CD4-positive, alpha-beta T cell (primary cell): ENCODE measurements at regions of chr6 and their contacts with region 1.

Region 1: DNA sequence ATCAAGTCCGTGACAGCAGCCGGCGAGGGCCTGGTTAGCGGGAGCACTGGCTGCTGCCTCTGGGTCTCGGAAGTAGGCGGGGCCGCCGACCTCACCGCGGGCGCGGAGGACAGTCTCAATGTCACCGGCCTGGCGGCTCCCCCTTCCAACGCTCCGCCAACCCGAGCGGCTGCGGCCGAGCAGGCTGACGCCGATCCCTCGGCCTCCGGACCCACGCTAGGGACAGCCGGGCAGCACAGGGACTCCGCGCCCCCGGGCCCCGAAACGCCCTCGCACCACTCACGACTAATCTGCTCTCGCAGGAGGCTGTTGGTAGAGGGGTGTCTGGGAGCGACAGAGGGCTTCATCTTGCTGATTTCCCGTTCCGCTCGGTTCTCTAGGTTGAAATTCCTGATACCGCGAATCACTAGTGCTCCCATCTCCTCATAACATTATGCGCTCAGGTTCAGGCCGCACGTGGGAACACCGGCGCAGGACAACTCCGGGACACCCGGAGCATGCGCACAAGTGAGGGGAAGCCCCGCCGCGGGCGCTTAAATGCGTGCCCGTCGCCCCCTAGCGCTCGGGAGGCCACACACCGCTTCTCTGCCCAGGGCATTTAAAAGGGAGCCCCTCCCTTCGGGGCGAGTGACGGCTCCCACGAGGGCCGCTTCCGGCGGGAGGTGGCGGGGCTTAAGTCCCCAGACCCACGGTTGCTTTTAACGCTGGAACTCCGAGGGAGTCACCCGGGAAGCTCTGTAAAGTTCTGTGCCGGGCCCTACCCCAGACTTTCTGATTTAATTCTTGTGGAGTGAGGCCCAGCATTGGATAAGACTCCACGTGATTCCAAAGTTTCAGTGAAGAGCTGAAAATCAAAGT is at the start of gene NDUFAF4:
- DNase-seq: peak; percentile 89 to 97 (median 92)
- ATAC-seq: peak; percentile 92
- H3K4me3 ChIP-seq: peak within 1 kb of the TSS; percentile 82
- H3K4me3 Mint-ChIP-seq: peak within 1 kb of the TSS; percentile 100
- H3K27ac ChIP-seq: peak within 1 kb of the TSS; percentile 89 to 95
- H3K27ac Mint-ChIP-seq: peak within 1 kb of the TSS; percentile 85
- H3K4me1 ChIP-seq: peaks cover 10% of the 10 kb centered on the region
- H3K4me1 Mint-ChIP-seq: peaks cover 42% of the 10 kb centered on the region
- H3K27me3 ChIP-seq: no peaks in the 10 kb centered on the region
- H3K27me3 Mint-ChIP-seq: peaks cover 9% of the 10 kb centered on the region
- CTCF ChIP-seq: peak; percentile 87
- total RNA-seq, gene NDUFAF4: 31.6 to 37.3 TPM

Region 2: GRCh38 chr6:95577304-95578105 is 1320.1 kb before region 1 on chr6 and contains the start of gene MANEA:
- CTCF ChIA-PET with region 1: interaction called, 3 read pairs
- POLR2A ChIA-PET with region 1: no interaction called
- intact Hi-C with region 1: loop called in 1 of 2 experiments (anchors 10 kb)
- DNase-seq: peak; percentile 59 to 93 (median 76)
- ATAC-seq: peak; percentile 84
- H3K4me3 ChIP-seq: peak within 1 kb of the TSS; percentile 91
- H3K4me3 Mint-ChIP-seq: peak within 1 kb of the TSS; percentile 95
- H3K27ac ChIP-seq: peak within 1 kb of the TSS; percentile 76 to 84
- H3K27ac Mint-ChIP-seq: peak within 1 kb of the TSS; percentile 95
- H3K4me1 ChIP-seq: peaks cover 11% of the 10 kb centered on the region
- H3K4me1 Mint-ChIP-seq: peaks cover 77% of the 10 kb centered on the region
- H3K27me3 ChIP-seq: no peaks in the 10 kb centered on the region
- H3K27me3 Mint-ChIP-seq: no peaks in the 10 kb centered on the region
- CTCF ChIP-seq: no peak
- total RNA-seq, gene MANEA: 6.1 to 8.0 TPM

Region 3: GRCh38 chr6:96626759-96627364 is 270.8 kb before region 1 on chr6:
- CTCF ChIA-PET with region 1: no interaction called
- POLR2A ChIA-PET with region 1: interaction called, 4 read pairs
- intact Hi-C with region 1: loop called in 1 of 2 experiments (anchors 5 kb)
- DNase-seq: peak in 3 of 14 experiments; percentile 21 to 39 (median 30)
- ATAC-seq: peak; percentile 41
- H3K4me3 ChIP-seq: no peak overlapping the region
- H3K4me3 Mint-ChIP-seq: no peak overlapping the region
- H3K27ac ChIP-seq: no peak overlapping the region
- H3K27ac Mint-ChIP-seq: no peak overlapping the region
- H3K4me1 ChIP-seq: no peaks in the 10 kb centered on the region
- H3K4me1 Mint-ChIP-seq: no peaks in the 10 kb centered on the region
- H3K27me3 ChIP-seq: no peaks in the 10 kb centered on the region
- H3K27me3 Mint-ChIP-seq: peaks cover 18% of the 10 kb centered on the region
- CTCF ChIP-seq: peak; percentile 57

Region 4: DNA sequence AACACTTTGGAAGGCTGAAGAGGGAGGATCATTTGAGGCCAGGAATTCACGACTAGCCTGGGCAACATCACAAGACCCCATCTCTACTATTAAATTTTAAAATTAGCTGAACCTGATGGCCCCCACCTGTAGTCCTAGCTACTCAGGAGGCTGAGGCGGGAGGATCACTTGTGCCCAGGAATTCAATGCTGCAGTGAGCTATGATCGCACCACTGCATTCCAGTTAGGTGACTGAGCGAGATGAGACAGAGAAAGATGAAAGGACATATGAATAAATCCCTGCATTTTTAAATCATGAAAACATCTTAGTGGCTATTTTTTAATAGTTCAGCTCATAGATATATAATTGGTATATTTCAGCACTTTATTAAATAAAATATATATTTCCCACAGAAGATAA is 154.1 kb before region 1 on chr6:
- CTCF ChIA-PET with region 1: no interaction called
- POLR2A ChIA-PET with region 1: no interaction called
- intact Hi-C with region 1: no loop called
- DNase-seq: no peak
- ATAC-seq: no peak
- H3K4me3 ChIP-seq: no peak overlapping the region
- H3K4me3 Mint-ChIP-seq: no peak overlapping the region
- H3K27ac ChIP-seq: no peak overlapping the region
- H3K27ac Mint-ChIP-seq: no peak overlapping the region
- H3K4me1 ChIP-seq: no peaks in the 10 kb centered on the region
- H3K4me1 Mint-ChIP-seq: no peaks in the 10 kb centered on the region
- H3K27me3 ChIP-seq: no peaks in the 10 kb centered on the region
- H3K27me3 Mint-ChIP-seq: peaks cover 4% of the 10 kb centered on the region
- CTCF ChIP-seq: no peak

Region 5: DNA sequence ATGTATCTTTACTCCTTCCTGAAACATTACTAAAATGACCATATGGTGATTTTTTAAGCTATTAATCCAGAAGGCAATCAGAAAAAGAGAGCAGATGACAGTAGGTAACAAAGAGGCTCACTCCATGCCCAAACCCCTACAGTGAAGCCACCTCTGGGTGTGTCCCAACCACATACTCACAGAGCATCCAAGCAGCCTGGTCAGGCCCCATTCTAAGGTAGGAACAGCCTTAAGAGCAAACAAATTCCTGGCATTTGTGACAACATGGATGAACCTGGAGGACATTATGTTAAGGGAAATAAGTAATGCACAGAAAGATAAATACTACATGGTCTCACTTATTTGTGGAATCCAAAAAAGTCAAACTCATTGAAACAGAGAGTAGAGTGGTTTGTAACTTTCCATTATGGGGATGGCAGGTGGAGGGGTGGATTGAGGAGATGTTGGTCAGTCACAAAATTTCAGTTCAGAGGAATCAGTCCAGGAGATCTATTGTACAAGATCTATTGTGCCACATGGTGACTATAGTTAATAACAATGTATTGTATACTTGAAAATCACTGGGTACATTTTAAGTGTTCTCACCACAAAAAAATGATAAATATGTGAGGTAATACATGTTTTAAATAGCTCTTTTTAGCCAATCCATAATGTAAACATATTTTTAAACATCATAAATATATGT is 140.6 kb before region 1 on chr6:
- CTCF ChIA-PET with region 1: no interaction called
- POLR2A ChIA-PET with region 1: no interaction called
- intact Hi-C with region 1: no loop called
- DNase-seq: no peak
- ATAC-seq: no peak
- H3K4me3 ChIP-seq: no peak overlapping the region
- H3K4me3 Mint-ChIP-seq: no peak overlapping the region
- H3K27ac ChIP-seq: no peak overlapping the region
- H3K27ac Mint-ChIP-seq: no peak overlapping the region
- H3K4me1 ChIP-seq: no peaks in the 10 kb centered on the region
- H3K4me1 Mint-ChIP-seq: no peaks in the 10 kb centered on the region
- H3K27me3 ChIP-seq: peaks cover 0 to 13% of the 10 kb centered on the region in 2 experiments
- H3K27me3 Mint-ChIP-seq: peaks cover 29% of the 10 kb centered on the region
- CTCF ChIP-seq: no peak

Region 6: GRCh38 chr6:96923871-96924493 is 26.4 kb after region 1 on chr6:
- CTCF ChIA-PET with region 1: interaction called, 19 read pairs
- POLR2A ChIA-PET with region 1: interaction called, 34 read pairs
- intact Hi-C with region 1: loop called (anchors 1 kb)
- DNase-seq: peak in 5 of 14 experiments; percentile 0 to 74 (median 2)
- ATAC-seq: no peak
- H3K4me3 ChIP-seq: peak overlapping the region; percentile 72
- H3K4me3 Mint-ChIP-seq: peak overlapping the region; percentile 93
- H3K27ac ChIP-seq: peak overlapping the region; percentile 93 to 96
- H3K27ac Mint-ChIP-seq: peak overlapping the region; percentile 98
- H3K4me1 ChIP-seq: peaks cover 17% of the 10 kb centered on the region
- H3K4me1 Mint-ChIP-seq: peaks cover 35% of the 10 kb centered on the region
- H3K27me3 ChIP-seq: no peaks in the 10 kb centered on the region
- H3K27me3 Mint-ChIP-seq: no peaks in the 10 kb centered on the region
- CTCF ChIP-seq: no peak

Region 7: GRCh38 chr6:97059473-97059872 is 161.9 kb after region 1 on chr6:
- CTCF ChIA-PET with region 1: no interaction called
- POLR2A ChIA-PET with region 1: no interaction called
- intact Hi-C with region 1: loop called (anchors 2 to 5 kb)
- DNase-seq: peak in 3 of 14 experiments; percentile 49 to 55 (median 49)
- ATAC-seq: peak; percentile 32
- H3K4me3 ChIP-seq: no peak overlapping the region
- H3K4me3 Mint-ChIP-seq: no peak overlapping the region
- H3K27ac ChIP-seq: no peak overlapping the region
- H3K27ac Mint-ChIP-seq: no peak overlapping the region
- H3K4me1 ChIP-seq: no peaks in the 10 kb centered on the region
- H3K4me1 Mint-ChIP-seq: no peaks in the 10 kb centered on the region
- H3K27me3 ChIP-seq: no peaks in the 10 kb centered on the region
- H3K27me3 Mint-ChIP-seq: no peaks in the 10 kb centered on the region
- CTCF ChIP-seq: peak; percentile 69